Posterior vena cava (tissue), 2 donors: ENCODE measurements at regions of chr4 and their contacts with region 1.

Region 1: GRCh38 chr4:149493492-149493891 is 322.2 kb downstream of the IQCM start:
- DNase-seq: no peak

Region 2: GRCh38 chr4:149845743-149846142 is 352.3 kb after region 1 on chr4:
- intact Hi-C with region 1: loop called in 1 of 2 experiments (anchors 10 kb)
- DNase-seq: no peak